Activated CD8-positive, alpha-beta T cell treated with anti-CD3 and anti-CD28 coated beads for 36 hours (primary cell): ENCODE measurements at regions of chr13 and their contacts with region 1.

Region 1: DNA sequence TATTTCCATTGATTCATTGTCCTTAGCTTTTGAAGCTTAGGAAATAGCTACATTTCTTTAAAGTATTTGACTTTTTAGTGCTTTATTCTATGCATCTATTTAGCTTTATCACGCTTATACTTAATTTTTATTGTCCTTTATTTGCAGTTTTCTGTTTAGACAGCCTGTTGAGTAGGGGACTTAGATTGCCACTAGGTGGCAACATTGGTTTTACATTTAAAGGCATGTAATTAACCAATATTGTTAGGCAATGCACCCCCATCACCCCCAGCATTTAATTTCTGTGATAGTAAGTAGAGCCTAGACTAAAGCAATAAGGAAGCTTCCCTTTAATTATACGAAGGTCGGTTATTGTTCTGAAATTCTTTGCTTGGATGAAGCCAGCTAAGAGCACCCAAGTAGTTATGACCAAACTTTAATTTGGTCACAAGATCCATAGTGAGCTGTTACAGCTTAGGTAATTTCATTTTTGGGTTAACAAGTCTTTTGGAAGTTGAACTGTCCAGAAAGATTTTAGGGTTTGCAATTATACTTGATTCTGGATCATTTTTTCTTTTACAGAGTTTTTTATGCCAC is 36.5 kb downstream of the B3GLCT start:
- DNase-seq: peak; percentile 16
- ATAC-seq: no peak
- H3K4me3 Mint-ChIP-seq: no peak overlapping the region
- H3K27ac Mint-ChIP-seq: no peak overlapping the region
- H3K4me1 Mint-ChIP-seq: no peaks in the 10 kb centered on the region
- H3K27me3 Mint-ChIP-seq: no peaks in the 10 kb centered on the region
- CTCF ChIP-seq: peak; percentile 71

Region 2: GRCh38 chr13:31045286-31046081 is 190.8 kb before region 1 on chr13:
- CTCF ChIA-PET with region 1: no interaction called
- POLR2A ChIA-PET with region 1: no interaction called
- intact Hi-C with region 1: no loop called
- DNase-seq: peak; percentile 86
- ATAC-seq: peak; percentile 84
- H3K4me3 Mint-ChIP-seq: peak overlapping the region; percentile 2
- H3K27ac Mint-ChIP-seq: peak overlapping the region; percentile 87
- H3K4me1 Mint-ChIP-seq: peaks cover 35% of the 10 kb centered on the region
- H3K27me3 Mint-ChIP-seq: peaks cover 17% of the 10 kb centered on the region
- CTCF ChIP-seq: no peak

Region 3: GRCh38 chr13:31248965-31249539 is 12.8 kb after region 1 on chr13:
- CTCF ChIA-PET with region 1: interaction called, 22 read pairs
- POLR2A ChIA-PET with region 1: no interaction called
- intact Hi-C with region 1: no loop called
- DNase-seq: no peak
- ATAC-seq: no peak
- H3K4me3 Mint-ChIP-seq: no peak overlapping the region
- H3K27ac Mint-ChIP-seq: no peak overlapping the region
- H3K4me1 Mint-ChIP-seq: no peaks in the 10 kb centered on the region
- H3K27me3 Mint-ChIP-seq: no peaks in the 10 kb centered on the region
- CTCF ChIP-seq: no peak

Region 4: GRCh38 chr13:31424117-31424729 is 187.9 kb after region 1 on chr13:
- CTCF ChIA-PET with region 1: interaction called, 79 read pairs
- POLR2A ChIA-PET with region 1: no interaction called
- intact Hi-C with region 1: loop called (anchors 2 kb)
- DNase-seq: peak; percentile 78
- ATAC-seq: peak; percentile 88
- H3K4me3 Mint-ChIP-seq: no peak overlapping the region
- H3K27ac Mint-ChIP-seq: no peak overlapping the region
- H3K4me1 Mint-ChIP-seq: peaks cover 2% of the 10 kb centered on the region
- H3K27me3 Mint-ChIP-seq: peaks cover 3% of the 10 kb centered on the region
- CTCF ChIP-seq: peak; percentile 87

Region 5: DNA sequence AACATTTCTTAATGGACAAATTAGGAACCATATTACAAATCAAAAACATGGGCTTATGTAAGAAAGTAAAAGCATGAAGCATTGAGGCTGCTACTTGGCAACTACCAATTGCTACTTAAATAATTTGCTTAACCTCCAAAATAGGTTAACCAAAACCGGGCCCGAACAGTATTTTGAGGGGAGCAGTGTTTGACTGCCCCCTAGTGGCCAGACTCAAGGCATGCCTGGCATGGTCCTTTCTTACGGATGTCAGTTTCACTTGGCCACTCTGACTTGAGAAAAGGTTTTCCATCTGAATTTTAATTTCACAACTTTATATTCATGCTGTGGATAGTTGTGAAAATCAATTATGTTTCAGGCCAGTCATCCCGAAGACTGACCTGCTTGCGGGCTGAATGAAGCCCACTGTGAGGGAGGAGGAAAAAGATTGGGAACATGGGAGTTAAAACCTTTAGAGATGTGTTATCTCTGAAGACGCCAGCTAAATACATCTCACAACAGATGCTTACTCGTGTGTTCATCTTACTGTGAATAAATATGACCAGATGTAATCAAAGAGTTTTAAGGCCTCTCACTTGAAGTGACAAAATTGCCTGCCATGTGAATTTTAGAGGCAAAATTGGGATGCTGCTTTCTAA is 505.9 kb after region 1 on chr13:
- CTCF ChIA-PET with region 1: interaction called, 3 read pairs
- POLR2A ChIA-PET with region 1: no interaction called
- intact Hi-C with region 1: loop called (anchors 5 kb)
- DNase-seq: peak; percentile 72
- ATAC-seq: no peak
- H3K4me3 Mint-ChIP-seq: no peak overlapping the region
- H3K27ac Mint-ChIP-seq: no peak overlapping the region
- H3K4me1 Mint-ChIP-seq: peaks cover 2% of the 10 kb centered on the region
- H3K27me3 Mint-ChIP-seq: peaks cover 8% of the 10 kb centered on the region
- CTCF ChIP-seq: peak; percentile 92